ENCODE measurements at regions of chr14 and their contacts with region 1.

Region 1: GRCh38 chr14:103185051-103185992 is 62.1 kb downstream of the TNFAIP2 start:
- DNase-seq: no peak
- H3K4me3 ChIP-seq: no peak overlapping the region
- H3K27ac ChIP-seq: peak overlapping the region in 3 of 4 donors; percentile 12 to 63 (median 62)
- H3K4me1 ChIP-seq: peaks cover 8 to 40% (median 10%) of the 10 kb centered on the region in 3 donors
- H3K27me3 ChIP-seq: peaks cover 0 to 49% (median 2%) of the 10 kb centered on the region in 4 donors
- CTCF ChIP-seq: peak; percentile 19 to 86 (median 72)
- POLR2A ChIP-seq: no peak

Region 2: GRCh38 chr14:103104654-103105452 is 80.5 kb before region 1 on chr14:
- intact Hi-C with region 1: loop called (anchors 10 kb)
- DNase-seq: no peak
- H3K4me3 ChIP-seq: peak overlapping the region in 2 of 4 donors; percentile 7 to 58
- H3K27ac ChIP-seq: no peak overlapping the region
- H3K4me1 ChIP-seq: peaks cover 35 to 50% (median 44%) of the 10 kb centered on the region in 3 donors
- H3K27me3 ChIP-seq: peaks cover 5 to 56% (median 11%) of the 10 kb centered on the region in 4 donors
- CTCF ChIP-seq: peak; percentile 96 to 99 (median 98)
- POLR2A ChIP-seq: no peak

Region 3: DNA sequence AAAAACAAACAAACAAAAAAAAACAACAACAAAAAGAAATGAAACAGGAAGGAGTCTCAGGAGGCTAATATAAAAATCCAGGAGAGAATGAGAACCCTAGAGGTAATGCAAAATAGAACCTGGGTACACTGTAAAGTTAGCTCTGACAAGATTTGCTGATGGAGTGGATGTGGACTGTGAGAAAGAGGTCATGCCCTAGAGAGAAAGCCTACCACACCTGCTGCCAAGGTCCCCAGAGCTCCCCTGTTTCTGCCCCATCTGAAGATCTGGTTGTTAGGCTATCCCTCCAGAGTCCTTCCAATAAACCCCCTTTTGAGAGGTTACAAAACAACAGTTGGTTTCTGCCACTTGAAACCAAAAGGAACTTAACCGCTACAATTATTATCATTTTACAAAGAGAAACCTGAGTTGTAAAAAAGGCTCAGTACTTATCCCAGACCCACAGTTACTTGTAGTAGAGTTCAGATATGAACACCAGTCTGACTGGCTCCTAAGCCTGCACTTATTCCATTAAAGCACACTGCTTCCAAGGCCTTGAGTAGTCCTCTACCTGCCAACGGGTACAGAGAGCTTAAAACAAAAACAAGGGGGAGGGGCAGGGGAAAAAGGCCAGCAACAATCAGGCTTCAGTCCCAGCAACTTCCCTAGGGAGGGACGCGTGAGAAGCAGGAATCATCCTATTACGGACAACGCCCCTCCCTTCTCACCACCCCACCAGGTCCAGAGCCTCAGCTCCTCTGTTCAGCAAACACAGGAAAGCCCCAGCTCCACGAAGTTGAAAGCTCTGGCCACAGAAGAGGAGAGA is 634.4 kb after region 1 on chr14:
- intact Hi-C with region 1: no loop called
- DNase-seq: no peak
- H3K4me3 ChIP-seq: peak overlapping the region in 1 of 4 donors; percentile 23
- H3K27ac ChIP-seq: peak overlapping the region in 3 of 4 donors; percentile 7 to 43 (median 34)
- H3K4me1 ChIP-seq: peaks cover 10 to 34% (median 18%) of the 10 kb centered on the region in 3 donors
- H3K27me3 ChIP-seq: no peaks in the 10 kb centered on the region
- CTCF ChIP-seq: no peak
- POLR2A ChIP-seq: no peak

Measured in esophagus squamous epithelium (tissue), 5 donors.